Activated T-helper 2 cell treated with anti-CD3 and anti-CD28 coated beads, Interferon-gamma antibody, Interleukin-2, Interleukin-4, amounts not matched to agents 10 μg/mL and 5 μg/mL and 100 μg/mL, durations not matched to agents 14 hours and 24 hours and 36 hours (primary cell): ENCODE measurements at regions of chr16 and their contacts with region 1.

Region 1: GRCh38 chr16:85305996-85306792 is 193.9 kb upstream of the CIBAR2 start:
- DNase-seq: peak; percentile 85
- H3K4me3 Mint-ChIP-seq: peak overlapping the region; percentile 66
- H3K27ac Mint-ChIP-seq: peak overlapping the region; percentile 93
- H3K4me1 Mint-ChIP-seq: peaks cover 41% of the 10 kb centered on the region
- H3K27me3 Mint-ChIP-seq: peaks cover 2% of the 10 kb centered on the region

Region 2: GRCh38 chr16:85275533-85276249 is 30.5 kb before region 1 on chr16:
- intact Hi-C with region 1: no loop called
- DNase-seq: peak; percentile 53
- H3K4me3 Mint-ChIP-seq: no peak overlapping the region
- H3K27ac Mint-ChIP-seq: no peak overlapping the region
- H3K4me1 Mint-ChIP-seq: no peaks in the 10 kb centered on the region
- H3K27me3 Mint-ChIP-seq: no peaks in the 10 kb centered on the region

Region 3: DNA sequence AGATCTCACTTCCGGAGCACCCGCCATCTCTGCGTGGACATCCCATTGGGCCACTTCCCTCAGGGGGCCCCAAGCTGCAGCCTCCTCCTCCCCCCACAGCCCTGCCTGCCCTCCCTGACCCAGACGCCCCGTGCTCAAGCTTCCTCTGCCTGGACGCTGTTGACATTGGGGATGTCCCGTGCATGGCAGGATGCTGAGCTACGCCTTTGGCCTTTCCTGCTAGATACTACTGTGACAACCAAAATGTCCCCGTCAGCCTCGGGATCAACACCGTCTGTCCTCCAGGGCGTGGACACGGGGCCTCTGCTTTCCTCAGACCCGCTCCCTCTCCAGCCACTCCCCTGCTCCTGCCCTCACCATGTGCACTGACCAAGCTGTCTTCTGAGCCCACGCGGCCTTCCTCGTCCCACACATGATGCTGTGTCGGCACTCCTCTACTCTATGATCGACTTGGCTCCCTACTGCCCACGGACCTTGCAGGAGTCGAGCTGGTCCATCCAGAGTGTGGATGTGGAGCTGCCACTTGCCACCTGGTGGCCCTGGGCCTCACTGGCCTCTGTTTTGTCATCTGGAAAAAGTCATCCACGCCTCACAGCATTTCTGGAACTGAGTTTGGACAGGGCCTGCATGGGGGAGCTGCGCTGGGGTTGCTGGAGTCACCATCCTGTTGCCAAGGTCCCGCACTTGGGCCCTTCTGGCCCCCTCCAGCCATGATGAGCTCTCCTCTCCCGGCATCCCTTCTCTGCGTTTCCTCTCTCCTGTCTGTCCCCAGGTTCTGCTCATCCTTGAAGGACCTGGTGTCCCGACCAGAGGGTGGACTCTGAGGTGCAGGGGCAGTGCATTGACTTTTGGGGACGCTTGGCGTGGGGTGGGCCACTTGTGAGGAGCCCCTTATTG is 27.8 kb after region 1 on chr16:
- intact Hi-C with region 1: loop called (anchors 2 kb)
- DNase-seq: no peak
- H3K4me3 Mint-ChIP-seq: no peak overlapping the region
- H3K27ac Mint-ChIP-seq: no peak overlapping the region
- H3K4me1 Mint-ChIP-seq: peaks cover 12% of the 10 kb centered on the region
- H3K27me3 Mint-ChIP-seq: peaks cover 10% of the 10 kb centered on the region

Region 4: DNA sequence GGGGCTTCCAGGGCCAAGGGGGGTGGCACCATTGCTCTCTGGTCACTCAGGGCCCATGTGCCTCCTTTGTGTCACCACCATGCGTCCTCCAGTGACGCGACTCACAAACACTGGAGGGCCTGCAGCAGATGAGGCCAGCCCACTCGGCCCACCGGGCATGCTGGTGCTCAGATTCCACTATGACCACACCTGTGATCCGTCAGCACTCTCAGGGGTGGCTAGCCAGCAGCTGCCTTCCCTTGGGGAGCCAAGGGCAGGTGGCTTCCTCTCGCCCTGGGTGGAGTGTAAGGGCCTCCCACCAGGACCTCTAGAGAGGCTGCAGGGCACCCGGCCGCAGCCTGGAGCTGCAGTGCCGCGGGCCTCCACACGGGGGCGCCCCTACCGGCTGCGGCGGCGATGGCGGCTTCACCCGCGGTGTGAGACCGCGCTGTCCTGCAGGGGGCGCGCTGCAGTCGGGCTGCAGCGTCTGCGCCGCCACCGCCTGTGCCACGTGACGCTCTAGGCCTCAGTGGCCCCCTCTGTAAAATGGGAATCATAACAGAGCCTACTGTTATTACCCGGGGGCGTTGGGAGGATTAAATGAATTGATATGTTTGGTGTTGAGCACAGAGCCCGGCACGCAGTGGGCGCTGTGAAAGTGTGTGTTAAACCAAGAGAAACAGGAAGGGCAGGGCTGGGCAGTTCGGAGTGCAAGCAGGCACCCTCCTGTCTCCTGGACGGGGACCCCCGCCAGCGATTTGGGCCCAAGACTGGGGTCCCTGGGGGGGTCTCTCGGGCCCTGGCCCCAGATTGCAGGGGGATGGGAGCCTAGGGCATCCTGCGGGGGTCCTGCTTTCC is 114.5 kb after region 1 on chr16:
- intact Hi-C with region 1: loop called (anchors 10 kb)
- DNase-seq: peak; percentile 66
- H3K4me3 Mint-ChIP-seq: no peak overlapping the region
- H3K27ac Mint-ChIP-seq: no peak overlapping the region
- H3K4me1 Mint-ChIP-seq: peaks cover 2% of the 10 kb centered on the region
- H3K27me3 Mint-ChIP-seq: no peaks in the 10 kb centered on the region

Region 5: DNA sequence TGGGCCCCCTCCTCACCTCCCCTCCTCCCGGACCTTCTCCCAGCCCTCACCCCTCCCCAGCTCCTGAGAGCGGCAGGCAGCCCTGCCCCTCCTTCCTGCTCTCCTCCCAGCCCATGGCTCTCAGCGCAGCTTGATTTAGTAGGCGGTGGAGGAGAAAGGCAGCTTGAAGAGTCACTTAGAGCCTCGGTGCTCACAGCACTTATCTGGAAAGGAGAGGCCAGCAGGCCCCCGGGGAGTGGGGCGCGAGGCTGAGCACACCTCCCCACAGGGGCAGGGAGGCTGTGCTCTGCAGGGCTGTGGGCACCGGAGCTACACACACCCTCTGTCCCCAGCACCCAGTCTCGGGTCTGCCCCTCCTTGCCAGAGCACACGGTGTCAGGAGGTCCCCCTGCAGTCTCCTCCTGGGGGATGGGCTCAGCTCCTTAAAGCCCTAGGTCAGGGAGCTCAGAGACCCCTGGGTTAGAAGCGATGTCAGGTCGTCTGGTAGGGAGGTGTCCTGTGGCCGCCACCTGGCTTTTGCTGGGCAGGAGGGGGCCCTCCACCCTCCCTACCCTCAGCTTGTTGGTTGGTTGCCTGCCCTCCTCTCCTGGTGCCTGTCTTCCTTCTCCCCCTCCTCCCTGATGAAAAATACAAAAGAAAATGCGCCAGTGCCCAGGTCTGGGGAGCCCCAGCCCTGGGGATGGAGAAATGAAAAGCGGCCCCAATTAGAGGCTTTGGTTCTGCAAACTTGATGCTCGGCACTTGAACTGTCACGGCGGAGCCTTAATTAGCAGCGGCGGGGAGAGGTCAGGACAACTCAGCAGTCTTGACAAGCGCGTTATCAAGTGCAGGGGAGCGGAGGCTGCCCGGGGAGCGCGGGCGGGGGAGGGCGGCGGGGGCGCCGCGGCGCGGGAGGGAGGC is 155.9 kb after region 1 on chr16:
- intact Hi-C with region 1: no loop called
- DNase-seq: no peak
- H3K4me3 Mint-ChIP-seq: no peak overlapping the region
- H3K27ac Mint-ChIP-seq: no peak overlapping the region
- H3K4me1 Mint-ChIP-seq: peaks cover 2% of the 10 kb centered on the region
- H3K27me3 Mint-ChIP-seq: peaks cover 31% of the 10 kb centered on the region

Region 6: GRCh38 chr16:85610508-85611332 is 304.5 kb after region 1 on chr16:
- intact Hi-C with region 1: loop called (anchors 2 kb)
- DNase-seq: peak; percentile 82
- H3K4me3 Mint-ChIP-seq: peak overlapping the region; percentile 77
- H3K27ac Mint-ChIP-seq: peak overlapping the region; percentile 49
- H3K4me1 Mint-ChIP-seq: peaks cover 23% of the 10 kb centered on the region
- H3K27me3 Mint-ChIP-seq: peaks cover 1% of the 10 kb centered on the region